MCF 10A (cell line): ENCODE measurements at regions of chr21 and their contacts with region 1.

Region 1: GRCh38 chr21:27564684-27565301 is 597.9 kb upstream of the ADAMTS5 start:
- DNase-seq: peak; percentile 51
- H3K4me3 Mint-ChIP-seq: no peak overlapping the region
- H3K27ac Mint-ChIP-seq: no peak overlapping the region
- H3K4me1 Mint-ChIP-seq: peaks cover 12% of the 10 kb centered on the region
- H3K27me3 Mint-ChIP-seq: no peaks in the 10 kb centered on the region
- CTCF ChIP-seq: peak; percentile 71

Region 2: DNA sequence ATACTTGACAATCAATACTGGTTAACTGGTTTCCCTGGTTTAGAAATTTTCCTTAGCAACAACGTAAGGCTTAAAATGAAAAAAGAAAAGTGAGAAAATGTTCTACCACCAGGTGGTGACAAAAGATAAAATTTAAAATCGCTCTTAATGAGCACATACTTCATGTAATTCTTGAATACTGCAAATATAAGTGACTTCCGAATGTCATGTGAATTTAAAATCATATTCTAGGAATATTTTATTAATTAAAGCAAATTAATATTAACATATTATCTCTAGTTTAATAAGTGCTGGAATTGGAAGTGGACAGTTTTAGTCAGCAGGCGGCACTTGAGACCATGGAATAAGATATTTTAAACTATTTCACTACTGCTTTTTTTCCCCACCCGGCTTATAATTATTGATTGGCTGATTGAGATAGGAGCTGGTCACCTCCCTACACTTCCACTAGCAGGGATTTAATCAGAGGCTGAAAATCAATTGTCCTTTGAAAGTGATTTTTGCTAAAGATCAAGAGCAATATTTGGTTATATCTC is 714.6 kb before region 1 on chr21:
- CTCF ChIA-PET with region 1: interaction called, 28 read pairs
- POLR2A ChIA-PET with region 1: no interaction called
- intact Hi-C with region 1: loop called (anchors 1 kb)
- DNase-seq: peak; percentile 52
- H3K4me3 Mint-ChIP-seq: no peak overlapping the region
- H3K27ac Mint-ChIP-seq: no peak overlapping the region
- H3K4me1 Mint-ChIP-seq: peaks cover 18% of the 10 kb centered on the region
- H3K27me3 Mint-ChIP-seq: peaks cover 29% of the 10 kb centered on the region
- CTCF ChIP-seq: peak; percentile 70

Region 3: GRCh38 chr21:26881504-26882228 is 683.1 kb before region 1 on chr21:
- CTCF ChIA-PET with region 1: interaction called, 26 read pairs
- POLR2A ChIA-PET with region 1: no interaction called
- intact Hi-C with region 1: loop called (anchors 2 kb)
- DNase-seq: peak; percentile 26
- H3K4me3 Mint-ChIP-seq: no peak overlapping the region
- H3K27ac Mint-ChIP-seq: no peak overlapping the region
- H3K4me1 Mint-ChIP-seq: no peaks in the 10 kb centered on the region
- H3K27me3 Mint-ChIP-seq: no peaks in the 10 kb centered on the region
- CTCF ChIP-seq: peak; percentile 30

Region 4: DNA sequence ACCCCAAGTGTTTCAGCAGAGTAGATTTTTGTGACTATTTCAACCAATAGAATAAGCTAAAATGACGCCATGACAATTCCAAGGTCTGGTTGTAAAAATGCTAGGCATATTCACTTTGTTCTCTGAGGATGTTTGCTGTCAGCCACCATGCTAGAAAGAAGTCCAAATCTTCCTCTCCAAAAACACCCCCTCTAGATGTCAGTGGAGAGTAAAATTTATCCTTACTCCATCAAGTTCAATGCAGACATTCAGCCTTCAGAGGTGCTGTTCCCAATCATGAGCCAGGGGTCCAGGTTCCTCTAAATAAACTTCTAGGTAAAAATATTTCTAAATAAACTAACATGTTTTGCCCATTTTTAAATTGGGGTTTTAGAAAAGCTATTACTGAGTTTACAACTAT is 202.5 kb before region 1 on chr21:
- CTCF ChIA-PET with region 1: interaction called, 11 read pairs
- POLR2A ChIA-PET with region 1: no interaction called
- intact Hi-C with region 1: loop called (anchors 5 kb)
- DNase-seq: peak; percentile 3
- H3K4me3 Mint-ChIP-seq: no peak overlapping the region
- H3K27ac Mint-ChIP-seq: no peak overlapping the region
- H3K4me1 Mint-ChIP-seq: no peaks in the 10 kb centered on the region
- H3K27me3 Mint-ChIP-seq: no peaks in the 10 kb centered on the region
- CTCF ChIP-seq: no peak

Region 5: GRCh38 chr21:27393726-27394125 is 171.1 kb before region 1 on chr21:
- CTCF ChIA-PET with region 1: no interaction called
- POLR2A ChIA-PET with region 1: no interaction called
- intact Hi-C with region 1: no loop called
- DNase-seq: no peak
- H3K4me3 Mint-ChIP-seq: no peak overlapping the region
- H3K27ac Mint-ChIP-seq: no peak overlapping the region
- H3K4me1 Mint-ChIP-seq: peaks cover 6% of the 10 kb centered on the region
- H3K27me3 Mint-ChIP-seq: no peaks in the 10 kb centered on the region
- CTCF ChIP-seq: no peak

Region 6: GRCh38 chr21:27498025-27498424 is 66.8 kb before region 1 on chr21:
- CTCF ChIA-PET with region 1: no interaction called
- POLR2A ChIA-PET with region 1: no interaction called
- intact Hi-C with region 1: no loop called
- DNase-seq: no peak
- H3K4me3 Mint-ChIP-seq: no peak overlapping the region
- H3K27ac Mint-ChIP-seq: no peak overlapping the region
- H3K4me1 Mint-ChIP-seq: peaks cover 9% of the 10 kb centered on the region
- H3K27me3 Mint-ChIP-seq: no peaks in the 10 kb centered on the region
- CTCF ChIP-seq: no peak

Region 7: DNA sequence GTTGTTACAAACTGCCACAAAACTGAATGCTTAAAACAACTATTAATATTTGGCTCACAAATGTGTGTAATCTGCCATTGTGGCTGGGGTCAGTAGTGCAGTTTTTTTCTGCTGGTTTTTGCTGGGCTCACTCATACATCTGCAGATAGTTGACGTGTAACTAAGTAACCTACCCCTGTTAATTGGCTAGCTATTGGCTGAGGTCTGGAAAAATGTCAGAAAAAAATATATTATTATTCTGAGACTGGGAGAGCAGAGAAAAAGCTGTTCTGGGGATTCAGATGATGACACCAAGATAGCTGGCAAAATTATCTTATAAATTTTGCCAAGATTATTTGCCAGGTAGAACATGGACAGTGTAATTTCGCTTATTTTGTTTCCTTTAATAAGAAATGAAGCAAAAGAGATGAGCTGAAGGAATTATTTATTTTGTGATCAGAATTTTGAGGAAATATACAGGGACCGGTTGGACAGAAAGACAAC is 18.2 kb after region 1 on chr21:
- CTCF ChIA-PET with region 1: interaction called, 22 read pairs
- POLR2A ChIA-PET with region 1: no interaction called
- intact Hi-C with region 1: no loop called
- DNase-seq: no peak
- H3K4me3 Mint-ChIP-seq: no peak overlapping the region
- H3K27ac Mint-ChIP-seq: no peak overlapping the region
- H3K4me1 Mint-ChIP-seq: no peaks in the 10 kb centered on the region
- H3K27me3 Mint-ChIP-seq: no peaks in the 10 kb centered on the region
- CTCF ChIP-seq: no peak